ENCODE measurements at regions of chr5 and their contacts with region 1.

Region 1: DNA sequence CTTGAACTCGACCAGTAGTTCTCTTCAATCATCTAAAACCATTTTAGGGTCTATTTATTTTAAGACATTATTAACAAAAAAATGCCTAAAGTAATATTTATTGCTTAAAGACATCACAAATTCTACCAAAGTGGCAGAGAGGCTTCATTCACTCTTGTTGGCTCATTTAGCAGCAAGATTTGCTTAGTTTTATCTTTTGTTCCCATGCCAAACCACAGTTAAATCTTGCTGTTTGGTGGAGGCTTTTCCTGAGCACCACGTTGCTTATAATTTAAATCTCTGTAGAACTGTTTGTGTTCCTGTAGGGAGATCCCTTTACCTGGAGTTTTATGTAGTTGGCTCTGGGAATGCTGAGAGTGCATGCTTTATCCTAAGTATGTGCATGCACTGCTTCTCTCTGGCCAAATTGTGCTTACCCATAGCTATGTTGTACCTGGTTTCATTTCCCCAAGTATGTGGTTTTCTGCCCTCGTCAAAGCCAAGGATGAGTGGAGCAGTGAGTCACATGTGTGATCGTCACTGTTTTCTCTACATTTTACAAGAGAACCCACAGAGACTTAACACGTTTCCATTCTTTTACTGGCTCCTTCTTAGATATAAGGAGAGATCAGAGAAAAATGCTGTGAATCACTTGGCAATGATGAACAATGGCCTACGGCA is 42.1 kb upstream of the MAST4 start:
- DNase-seq: peak; percentile 71
- ATAC-seq: peak; percentile 90
- H3K4me3 Mint-ChIP-seq: no peak overlapping the region
- H3K27ac Mint-ChIP-seq: peak overlapping the region; percentile 51
- H3K4me1 Mint-ChIP-seq: peaks cover 30% of the 10 kb centered on the region
- H3K27me3 Mint-ChIP-seq: peaks cover 24% of the 10 kb centered on the region

Region 2: GRCh38 chr5:66312291-66312690 is 241.8 kb before region 1 on chr5:
- CTCF ChIA-PET with region 1: no interaction called
- POLR2A ChIA-PET with region 1: no interaction called
- intact Hi-C with region 1: no loop called
- DNase-seq: no peak
- ATAC-seq: no peak
- H3K4me3 Mint-ChIP-seq: no peak overlapping the region
- H3K27ac Mint-ChIP-seq: no peak overlapping the region
- H3K4me1 Mint-ChIP-seq: peaks cover 2% of the 10 kb centered on the region
- H3K27me3 Mint-ChIP-seq: peaks cover 13% of the 10 kb centered on the region

Region 3: GRCh38 chr5:66324357-66324756 is 229.7 kb before region 1 on chr5:
- CTCF ChIA-PET with region 1: no interaction called
- POLR2A ChIA-PET with region 1: no interaction called
- intact Hi-C with region 1: loop called in 1 of 2 experiments (anchors 1 kb)
- DNase-seq: no peak
- ATAC-seq: no peak
- H3K4me3 Mint-ChIP-seq: no peak overlapping the region
- H3K27ac Mint-ChIP-seq: no peak overlapping the region
- H3K4me1 Mint-ChIP-seq: peaks cover 11% of the 10 kb centered on the region
- H3K27me3 Mint-ChIP-seq: peaks cover 3% of the 10 kb centered on the region

Region 4: GRCh38 chr5:66540078-66540477 is 14.0 kb before region 1 on chr5:
- CTCF ChIA-PET with region 1: interaction called, 3 read pairs
- POLR2A ChIA-PET with region 1: interaction called, 6 read pairs
- intact Hi-C with region 1: loop called (anchors 1 kb)
- DNase-seq: peak; percentile 29
- ATAC-seq: peak; percentile 100
- H3K4me3 Mint-ChIP-seq: no peak overlapping the region
- H3K27ac Mint-ChIP-seq: no peak overlapping the region
- H3K4me1 Mint-ChIP-seq: peaks cover 15% of the 10 kb centered on the region
- H3K27me3 Mint-ChIP-seq: peaks cover 18% of the 10 kb centered on the region

Region 5: DNA sequence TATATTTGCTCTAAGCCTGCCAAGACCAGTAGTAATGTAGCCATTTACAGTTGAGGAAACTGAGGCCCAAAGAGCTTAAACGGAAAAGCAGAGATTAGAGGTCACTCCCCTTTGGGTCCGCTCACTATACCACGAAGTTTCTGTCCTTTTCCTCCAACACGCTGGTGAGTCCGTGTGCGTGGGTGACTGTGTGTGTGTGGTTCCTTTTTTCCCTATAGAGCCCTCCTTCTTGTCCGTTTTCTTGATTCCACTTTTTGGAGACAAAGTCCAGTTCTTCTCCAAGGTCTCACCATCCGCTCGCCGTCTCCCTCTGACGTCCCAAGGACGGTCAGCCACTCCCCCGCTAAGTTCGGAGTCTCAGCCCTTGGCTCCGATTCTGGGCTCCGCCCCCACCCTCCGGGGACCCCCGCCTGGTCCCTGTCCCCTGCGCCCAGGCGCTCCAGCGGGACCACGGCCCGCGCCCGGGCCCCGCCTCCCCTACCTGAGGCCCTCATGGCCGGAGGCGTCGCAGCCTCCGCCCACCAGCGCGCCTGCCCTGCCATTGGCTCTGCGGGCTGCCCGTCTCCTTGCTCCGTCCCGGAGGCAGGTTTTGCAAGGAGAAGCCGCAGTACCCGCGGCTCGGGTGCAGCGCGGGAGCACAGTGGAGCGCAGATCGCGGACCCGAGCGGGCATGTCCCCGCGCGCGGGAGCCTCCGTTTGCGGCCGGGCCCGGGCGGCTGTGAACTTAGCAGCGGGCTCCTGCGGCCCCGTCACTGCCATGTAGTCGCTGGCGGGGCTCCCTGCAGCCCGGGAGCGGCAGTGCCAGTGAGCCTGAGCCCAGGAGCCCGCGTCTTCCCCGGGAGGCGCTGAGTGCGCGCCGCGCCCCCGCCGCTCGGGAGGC is 42.0 kb after region 1 on chr5 and contains the start of gene MAST4:
- CTCF ChIA-PET with region 1: interaction called, 3 read pairs
- POLR2A ChIA-PET with region 1: no interaction called
- intact Hi-C with region 1: loop called in 1 of 2 experiments (anchors 2 kb)
- DNase-seq: peak; percentile 86
- ATAC-seq: peak; percentile 97
- H3K4me3 Mint-ChIP-seq: peak within 1 kb of the TSS; percentile 69
- H3K27ac Mint-ChIP-seq: no peak within 1 kb of the TSS
- H3K4me1 Mint-ChIP-seq: peaks cover 16% of the 10 kb centered on the region
- H3K27me3 Mint-ChIP-seq: peaks cover 49% of the 10 kb centered on the region
- total RNA-seq, gene MAST4: 19.2 to 26.7 TPM

Region 6: DNA sequence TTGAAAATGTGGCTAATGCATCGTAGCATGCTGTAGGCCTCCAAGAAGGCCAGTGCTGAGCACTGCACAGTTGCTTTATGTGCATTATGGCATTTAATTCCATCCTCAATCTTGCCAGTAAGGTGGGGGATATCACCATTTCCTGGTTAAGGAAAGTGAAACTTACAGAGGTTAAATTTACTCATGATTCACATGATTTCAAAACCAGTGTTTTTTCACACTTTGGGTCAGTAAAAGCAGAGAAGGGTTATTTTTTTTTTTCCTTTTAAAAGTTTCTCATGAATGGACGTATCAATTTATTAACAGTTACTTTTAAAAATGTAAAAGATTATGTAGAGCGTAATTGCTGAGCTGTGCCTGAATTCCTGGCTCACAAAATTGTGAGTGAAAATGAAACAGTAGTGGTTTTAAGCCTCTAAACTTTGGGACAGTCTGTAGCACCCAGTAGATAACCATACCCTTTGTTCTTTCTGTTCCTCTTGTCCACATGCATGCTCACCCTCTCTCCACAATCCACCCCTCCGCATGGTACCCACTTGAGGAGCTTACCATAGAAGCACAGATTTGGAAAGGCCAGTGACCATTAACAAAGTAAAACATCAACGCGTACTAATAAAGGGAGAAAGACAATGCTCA is 63.3 kb after region 1 on chr5:
- CTCF ChIA-PET with region 1: no interaction called
- POLR2A ChIA-PET with region 1: no interaction called
- intact Hi-C with region 1: loop called in 1 of 2 experiments (anchors 5 kb)
- DNase-seq: no peak
- ATAC-seq: peak; percentile 80
- H3K4me3 Mint-ChIP-seq: no peak overlapping the region
- H3K27ac Mint-ChIP-seq: no peak overlapping the region
- H3K4me1 Mint-ChIP-seq: peaks cover 15% of the 10 kb centered on the region
- H3K27me3 Mint-ChIP-seq: peaks cover 15% of the 10 kb centered on the region

Region 7: GRCh38 chr5:66840511-66841013 is 286.5 kb after region 1 on chr5:
- CTCF ChIA-PET with region 1: no interaction called
- POLR2A ChIA-PET with region 1: no interaction called
- intact Hi-C with region 1: loop called in 1 of 2 experiments (anchors 5 kb)
- DNase-seq: peak; percentile 68
- ATAC-seq: peak; percentile 86
- H3K4me3 Mint-ChIP-seq: no peak overlapping the region
- H3K27ac Mint-ChIP-seq: peak overlapping the region; percentile 67
- H3K4me1 Mint-ChIP-seq: peaks cover 47% of the 10 kb centered on the region
- H3K27me3 Mint-ChIP-seq: peaks cover 20% of the 10 kb centered on the region

Measured in activated CD4-positive, alpha-beta T cell treated with anti-CD3 and anti-CD28 coated beads for 36 hours (primary cell).